ENCODE measurements at regions of chr4 and their contacts with region 1.

Region 1: DNA sequence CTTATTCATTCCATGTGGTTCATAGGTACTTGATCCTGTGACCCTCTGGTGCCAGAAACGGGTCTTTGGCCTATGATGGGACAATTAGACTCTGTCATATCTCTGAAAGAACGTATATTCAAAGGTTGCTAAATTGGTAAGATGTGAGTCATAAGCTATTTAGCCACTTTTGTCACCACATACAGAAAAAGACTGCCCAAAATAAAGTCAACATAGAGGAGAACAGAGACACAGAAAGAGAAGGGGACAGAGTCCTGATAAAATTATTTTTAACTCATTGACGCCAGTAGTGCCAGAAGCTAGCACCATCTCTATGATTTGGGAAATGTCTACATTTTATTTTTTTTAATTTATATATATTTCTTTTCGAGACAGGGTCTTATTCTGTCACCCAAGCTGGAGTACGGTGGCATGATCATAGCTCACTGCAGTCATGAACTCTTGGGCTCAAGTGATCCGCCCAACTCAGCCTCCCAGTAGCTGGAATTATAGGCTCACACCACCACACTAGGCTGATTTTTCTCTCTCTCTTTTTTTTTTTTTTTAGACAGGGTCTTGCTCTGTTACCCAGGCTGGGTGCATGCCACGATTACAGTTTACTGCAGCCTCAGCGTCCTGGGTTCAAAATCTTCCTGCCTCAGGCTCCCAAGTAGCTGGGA is 92.1 kb upstream of the COX18 start:
- DNase-seq: no peak
- ATAC-seq: peak in 3 of 4 donors; percentile 59 to 71 (median 64)
- H3K4me3 ChIP-seq: no peak overlapping the region
- H3K27ac ChIP-seq: peak overlapping the region in 4 of 12 donors; percentile 2 to 39 (median 28)
- H3K4me1 ChIP-seq: peaks cover 0 to 10% (median 0%) of the 10 kb centered on the region in 12 donors
- H3K27me3 ChIP-seq: no peaks in the 10 kb centered on the region
- CTCF ChIP-seq: no peak
- POLR2A ChIP-seq: no peak

Region 2: DNA sequence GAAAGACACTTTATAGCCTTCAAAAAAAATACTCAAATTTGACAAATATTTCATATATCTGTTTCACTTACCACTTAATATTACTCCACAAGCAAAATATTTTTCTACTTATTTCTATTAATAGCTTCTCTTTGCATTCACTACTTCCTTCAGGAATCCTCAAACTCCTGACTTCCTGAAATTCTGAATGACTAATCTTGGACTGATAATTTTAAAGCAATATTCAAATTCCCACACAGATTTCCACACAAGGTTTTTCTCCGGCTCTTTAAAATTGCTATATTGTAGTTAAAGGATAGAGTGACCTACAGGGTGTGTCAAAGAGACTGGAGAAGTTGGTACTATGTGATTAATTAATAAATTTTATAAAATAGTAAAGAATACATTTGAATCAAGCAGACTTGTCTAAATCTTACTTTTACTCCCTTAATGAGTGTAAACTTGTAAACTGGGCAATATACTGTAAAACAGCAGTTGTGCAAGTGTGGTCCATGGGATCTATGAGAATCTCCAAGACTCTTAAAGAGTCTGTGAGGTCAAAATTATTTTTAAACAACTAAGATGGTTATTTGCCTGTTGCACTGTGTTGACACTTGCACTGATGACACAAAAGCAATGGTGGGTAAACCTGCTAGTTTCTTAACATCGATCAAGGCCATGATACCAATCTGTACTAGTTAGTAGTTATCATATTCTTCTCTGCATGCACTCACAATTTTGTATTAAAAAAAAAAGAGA is 52.4 kb after region 1 on chr4:
- intact Hi-C with region 1: loop called in 1 of 10 experiments (anchors 10 kb)
- DNase-seq: no peak
- ATAC-seq: peak in 2 of 4 donors; percentile 28 to 46
- H3K4me3 ChIP-seq: no peak overlapping the region
- H3K27ac ChIP-seq: peak overlapping the region in 2 of 12 donors; percentile 20 to 63
- H3K4me1 ChIP-seq: peaks cover 0 to 53% (median 21%) of the 10 kb centered on the region in 12 donors
- H3K27me3 ChIP-seq: no peaks in the 10 kb centered on the region
- CTCF ChIP-seq: no peak
- POLR2A ChIP-seq: no peak

Region 3: GRCh38 chr4:73234712-73235111 is 73.1 kb after region 1 on chr4:
- intact Hi-C with region 1: loop called in 1 of 10 experiments (anchors 10 kb)
- DNase-seq: no peak
- ATAC-seq: no peak
- H3K4me3 ChIP-seq: no peak overlapping the region
- H3K27ac ChIP-seq: no peak overlapping the region
- H3K4me1 ChIP-seq: peaks cover 0 to 18% (median 5%) of the 10 kb centered on the region in 12 donors
- H3K27me3 ChIP-seq: no peaks in the 10 kb centered on the region
- CTCF ChIP-seq: no peak
- POLR2A ChIP-seq: no peak